Activated naive CD4-positive, alpha-beta T cell treated with anti-CD3 and anti-CD28 coated beads for 36 hours (primary cell): ENCODE measurements at regions of chr1 and their contacts with region 1.

Region 1: GRCh38 chr1:151198255-151199127 is at the start of gene PIP5K1A:
- DNase-seq: peak; percentile 99
- H3K4me3 Mint-ChIP-seq: peak within 1 kb of the TSS; percentile 99
- H3K27ac Mint-ChIP-seq: peak within 1 kb of the TSS; percentile 99
- H3K4me1 Mint-ChIP-seq: peaks cover 39% of the 10 kb centered on the region
- H3K27me3 Mint-ChIP-seq: no peaks in the 10 kb centered on the region
- total RNA-seq, gene PIP5K1A: 72.6 to 82.5 TPM

Region 2: GRCh38 chr1:151165738-151166505 is 32.6 kb before region 1 on chr1 and contains the starts of genes LYSMD1 and SCNM1:
- CTCF ChIA-PET with region 1: no interaction called
- intact Hi-C with region 1: loop called (anchors 1 kb)
- DNase-seq: peak; percentile 99
- H3K4me3 Mint-ChIP-seq: peak within 1 kb of the TSS; percentile 92
- H3K27ac Mint-ChIP-seq: peak within 1 kb of the TSS; percentile 90
- H3K4me1 Mint-ChIP-seq: peaks cover 51% of the 10 kb centered on the region
- H3K27me3 Mint-ChIP-seq: no peaks in the 10 kb centered on the region
- total RNA-seq, gene LYSMD1: 4.5 to 4.8 TPM
- total RNA-seq, gene SCNM1: 60.5 to 64.2 TPM

Region 3: GRCh38 chr1:151254217-151255213 is 56.0 kb after region 1 on chr1 and contains the start of gene PSMD4:
- CTCF ChIA-PET with region 1: interaction called, 14 read pairs
- intact Hi-C with region 1: loop called (anchors 1 kb)
- DNase-seq: peak; percentile 97
- H3K4me3 Mint-ChIP-seq: peak within 1 kb of the TSS; percentile 95
- H3K27ac Mint-ChIP-seq: peak within 1 kb of the TSS; percentile 92
- H3K4me1 Mint-ChIP-seq: peaks cover 31% of the 10 kb centered on the region
- H3K27me3 Mint-ChIP-seq: peaks cover 2% of the 10 kb centered on the region
- total RNA-seq, gene PSMD4: 167 to 192 TPM

Region 4: GRCh38 chr1:151340870-151341754 is 142.6 kb after region 1 on chr1:
- CTCF ChIA-PET with region 1: interaction called, 6 read pairs
- intact Hi-C with region 1: loop called (anchors 1 kb)
- DNase-seq: peak; percentile 69
- H3K4me3 Mint-ChIP-seq: no peak overlapping the region
- H3K27ac Mint-ChIP-seq: peak overlapping the region; percentile 23
- H3K4me1 Mint-ChIP-seq: peaks cover 26% of the 10 kb centered on the region
- H3K27me3 Mint-ChIP-seq: no peaks in the 10 kb centered on the region

Region 5: DNA sequence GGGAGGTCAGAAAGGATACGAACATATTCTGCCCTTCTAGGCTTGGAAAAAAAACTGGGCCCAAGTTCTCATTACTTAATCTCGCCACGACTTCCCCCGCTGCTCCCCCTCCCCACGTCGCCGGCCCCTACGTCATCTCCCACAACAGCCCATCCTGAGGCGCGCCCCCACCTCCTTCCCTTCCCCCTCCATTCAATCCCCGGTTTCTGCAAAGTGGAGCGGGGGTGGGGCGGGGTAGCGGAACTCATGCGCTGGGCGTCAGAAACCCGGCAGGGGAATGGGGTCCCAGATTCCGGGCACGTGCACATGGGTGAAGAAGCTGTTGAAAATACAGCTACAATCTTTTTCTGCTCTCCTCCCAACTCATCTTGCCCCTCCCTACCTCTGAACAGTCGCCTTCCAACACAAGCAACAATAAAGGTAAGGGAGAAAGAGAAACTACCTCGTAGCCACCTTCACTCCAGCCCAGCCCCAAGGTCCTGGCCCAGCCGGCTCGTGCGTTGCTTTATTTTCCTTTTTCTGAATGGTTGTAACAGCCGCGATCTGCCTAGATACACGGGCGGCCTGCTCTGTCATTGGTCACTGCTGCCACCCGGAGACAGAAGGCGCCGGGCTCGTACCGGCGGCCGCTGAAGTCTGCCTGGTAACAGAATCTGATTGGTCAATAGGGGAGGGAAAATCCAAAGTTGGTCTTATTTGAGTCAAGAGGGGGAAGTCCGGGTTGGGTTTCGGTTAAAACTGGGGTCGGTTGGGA is 148.5 kb after region 1 on chr1 and contains the start of gene RFX5:
- CTCF ChIA-PET with region 1: interaction called, 3 read pairs
- intact Hi-C with region 1: loop called (anchors 1 kb)
- DNase-seq: peak; percentile 97
- H3K4me3 Mint-ChIP-seq: peak within 1 kb of the TSS; percentile 93
- H3K27ac Mint-ChIP-seq: peak within 1 kb of the TSS; percentile 96
- H3K4me1 Mint-ChIP-seq: peaks cover 33% of the 10 kb centered on the region
- H3K27me3 Mint-ChIP-seq: no peaks in the 10 kb centered on the region
- total RNA-seq, gene RFX5: 62.3 to 63.4 TPM

Region 6: GRCh38 chr1:151372061-151372934 is 173.8 kb after region 1 on chr1 and contains the start of gene SELENBP1:
- CTCF ChIA-PET with region 1: no interaction called
- intact Hi-C with region 1: no loop called
- DNase-seq: no peak
- H3K4me3 Mint-ChIP-seq: no peak within 1 kb of the TSS
- H3K27ac Mint-ChIP-seq: no peak within 1 kb of the TSS
- H3K4me1 Mint-ChIP-seq: no peaks in the 10 kb centered on the region
- H3K27me3 Mint-ChIP-seq: no peaks in the 10 kb centered on the region
- total RNA-seq, gene SELENBP1: not detected

Region 7: DNA sequence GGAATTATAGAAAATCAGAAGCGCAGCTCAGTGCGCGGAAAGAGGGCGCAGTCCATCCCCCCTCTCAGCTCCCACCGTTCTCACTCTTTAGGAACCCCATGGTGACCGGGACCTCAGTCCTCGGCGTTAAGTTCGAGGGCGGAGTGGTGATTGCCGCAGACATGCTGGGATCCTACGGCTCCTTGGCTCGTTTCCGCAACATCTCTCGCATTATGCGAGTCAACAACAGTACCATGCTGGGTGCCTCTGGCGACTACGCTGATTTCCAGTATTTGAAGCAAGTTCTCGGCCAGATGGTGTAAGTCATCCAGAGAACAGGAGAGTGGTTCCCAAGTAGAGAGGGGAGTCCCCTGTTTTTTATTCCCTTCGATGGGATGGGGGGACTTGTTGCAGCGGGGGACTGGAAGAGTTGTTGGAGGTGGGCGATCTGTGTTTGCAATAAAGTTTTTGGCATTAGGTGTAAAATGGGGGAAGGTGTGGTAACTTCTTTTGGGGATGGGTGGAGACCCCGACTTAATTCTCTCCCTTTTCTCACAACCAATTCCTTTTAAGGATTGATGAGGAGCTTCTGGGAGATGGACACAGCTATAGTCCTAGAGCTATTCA is 201.5 kb after region 1 on chr1:
- CTCF ChIA-PET with region 1: no interaction called
- intact Hi-C with region 1: loop called (anchors 1 kb)
- DNase-seq: peak; percentile 40
- H3K4me3 Mint-ChIP-seq: peak overlapping the region; percentile 84
- H3K27ac Mint-ChIP-seq: peak overlapping the region; percentile 94
- H3K4me1 Mint-ChIP-seq: peaks cover 26% of the 10 kb centered on the region
- H3K27me3 Mint-ChIP-seq: no peaks in the 10 kb centered on the region

Region 8: GRCh38 chr1:151459331-151460046 is 261.0 kb after region 1 on chr1 and contains the start of gene POGZ:
- CTCF ChIA-PET with region 1: no interaction called
- intact Hi-C with region 1: loop called (anchors 5 kb)
- DNase-seq: peak; percentile 97
- H3K4me3 Mint-ChIP-seq: peak within 1 kb of the TSS; percentile 78
- H3K27ac Mint-ChIP-seq: peak within 1 kb of the TSS; percentile 86
- H3K4me1 Mint-ChIP-seq: peaks cover 29% of the 10 kb centered on the region
- H3K27me3 Mint-ChIP-seq: peaks cover 11% of the 10 kb centered on the region
- total RNA-seq, gene POGZ: 69.7 to 73.7 TPM

Region 9: GRCh38 chr1:151472856-151473731 is 274.6 kb after region 1 on chr1:
- CTCF ChIA-PET with region 1: no interaction called
- intact Hi-C with region 1: no loop called
- DNase-seq: peak; percentile 39
- H3K4me3 Mint-ChIP-seq: peak overlapping the region; percentile 52
- H3K27ac Mint-ChIP-seq: peak overlapping the region; percentile 72
- H3K4me1 Mint-ChIP-seq: peaks cover 28% of the 10 kb centered on the region
- H3K27me3 Mint-ChIP-seq: no peaks in the 10 kb centered on the region